Panc1 (cell line): ENCODE measurements at regions of chr16 and their contacts with region 1.

Region 1: DNA sequence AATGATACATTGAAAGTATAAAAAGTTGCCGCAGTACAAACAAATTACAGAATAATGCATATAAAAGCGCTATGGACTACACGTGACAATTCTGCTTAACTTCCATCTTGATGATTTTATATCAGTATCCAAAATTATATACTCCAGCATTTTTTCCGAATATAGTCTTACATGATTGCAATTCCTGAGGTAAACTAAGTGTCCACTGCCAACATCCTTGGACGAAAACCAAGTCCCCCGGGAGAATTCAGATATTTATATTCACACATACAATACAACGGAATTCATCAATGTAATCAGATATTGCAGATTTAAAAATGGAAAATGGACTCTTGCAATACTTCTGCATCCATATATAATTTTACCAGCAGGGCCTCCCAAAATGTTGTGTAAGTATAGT is 8.9 kb upstream of the MYH11 start:
- DNase-seq: no peak
- ATAC-seq: no peak
- H3K4me3 ChIP-seq: no peak overlapping the region
- H3K27ac ChIP-seq: no peak overlapping the region
- H3K4me1 ChIP-seq: no peaks in the 10 kb centered on the region
- H3K27me3 ChIP-seq: no peaks in the 10 kb centered on the region
- CTCF ChIP-seq: no peak

Region 2: GRCh38 chr16:15607700-15608396 is 257.9 kb before region 1 on chr16:
- CTCF ChIA-PET with region 1: no interaction called
- POLR2A ChIA-PET with region 1: no interaction called
- in situ Hi-C with region 1: no loop called
- intact Hi-C with region 1: no loop called
- DNase-seq: no peak
- ATAC-seq: no peak
- H3K4me3 ChIP-seq: no peak overlapping the region
- H3K27ac ChIP-seq: peak overlapping the region; percentile 7; the same call in 1 of the 2 replicates
- H3K4me1 ChIP-seq: no peaks in the 10 kb centered on the region
- H3K27me3 ChIP-seq: no peaks in the 10 kb centered on the region
- CTCF ChIP-seq: no peak

Region 3: DNA sequence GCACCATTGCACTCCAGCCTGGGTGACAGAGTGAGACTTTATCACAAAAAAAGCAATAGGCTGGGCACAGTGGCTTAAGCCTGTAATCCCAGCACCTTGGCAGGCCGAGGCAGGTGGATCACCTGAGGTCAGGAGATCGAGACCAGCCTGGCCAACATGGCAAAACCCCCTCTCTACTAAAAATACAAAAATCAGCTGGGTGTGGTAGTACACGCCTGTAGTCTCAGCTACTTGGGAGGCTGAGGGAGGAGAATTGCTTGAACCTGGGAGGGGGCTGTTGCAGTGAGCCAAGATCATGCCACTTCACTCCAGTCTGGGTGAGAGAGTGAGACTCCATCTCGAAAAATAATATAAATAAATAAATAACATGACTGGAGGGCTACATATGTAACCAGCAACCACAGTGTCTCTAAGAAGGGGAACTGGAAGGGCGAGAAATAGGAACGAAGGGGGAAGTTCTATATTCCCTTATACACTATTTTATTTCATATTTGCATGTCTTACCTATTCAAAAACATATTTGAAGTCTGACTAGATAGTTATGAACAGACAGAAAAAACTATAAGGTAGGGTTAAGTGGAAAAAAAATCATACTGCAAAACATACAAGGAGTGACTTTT is 34.8 kb before region 1 on chr16:
- CTCF ChIA-PET with region 1: no interaction called
- POLR2A ChIA-PET with region 1: no interaction called
- in situ Hi-C with region 1: loop called (anchors 5 kb)
- intact Hi-C with region 1: no loop called
- DNase-seq: no peak
- ATAC-seq: no peak
- H3K4me3 ChIP-seq: no peak overlapping the region
- H3K27ac ChIP-seq: no peak overlapping the region
- H3K4me1 ChIP-seq: no peaks in the 10 kb centered on the region
- H3K27me3 ChIP-seq: no peaks in the 10 kb centered on the region
- CTCF ChIP-seq: no peak

Region 4: DNA sequence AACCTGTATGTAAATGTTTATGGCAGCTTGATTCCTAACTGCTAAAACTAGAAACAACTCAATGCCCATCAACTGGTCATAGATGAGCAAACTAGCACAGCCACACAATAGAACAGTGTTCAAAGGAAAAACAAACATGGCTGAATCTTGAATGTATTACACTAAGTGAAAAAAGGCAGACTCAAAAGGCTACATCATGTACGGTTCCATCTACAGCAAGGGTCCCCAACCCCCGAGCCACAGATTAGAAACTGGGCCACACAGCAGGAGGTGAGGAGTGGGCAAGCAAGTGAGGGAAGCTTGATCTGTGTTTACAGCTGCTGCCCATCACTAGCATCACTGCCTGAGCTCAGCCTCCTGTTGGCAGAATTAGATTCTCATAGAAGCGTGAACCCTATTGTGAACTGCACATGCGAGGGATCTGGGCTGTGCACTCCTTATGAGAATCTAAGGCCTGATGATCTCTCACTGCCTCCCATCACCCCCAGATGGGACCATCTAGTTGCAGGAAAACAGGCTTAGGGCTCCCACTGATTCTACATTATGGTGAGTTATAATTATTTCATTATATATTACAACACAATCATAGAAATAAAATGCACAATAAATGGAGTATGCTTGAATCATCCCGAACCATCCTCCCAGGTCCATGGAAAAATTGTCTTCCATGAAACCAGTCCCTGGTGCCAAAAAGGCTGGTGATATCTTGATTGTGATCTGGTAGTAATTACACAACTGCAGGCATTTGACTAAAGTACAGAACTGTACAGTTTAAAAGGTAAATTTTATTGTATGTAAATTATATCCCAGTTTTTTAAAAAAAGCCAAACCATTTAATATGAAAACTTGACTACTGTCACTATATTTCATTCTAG is 14.9 kb after region 1 on chr16:
- CTCF ChIA-PET with region 1: no interaction called
- POLR2A ChIA-PET with region 1: no interaction called
- in situ Hi-C with region 1: no loop called
- intact Hi-C with region 1: no loop called
- DNase-seq: no peak
- ATAC-seq: no peak
- H3K4me3 ChIP-seq: no peak overlapping the region
- H3K27ac ChIP-seq: peak overlapping the region; percentile 54
- H3K4me1 ChIP-seq: peaks cover 24% of the 10 kb centered on the region
- H3K27me3 ChIP-seq: no peaks in the 10 kb centered on the region
- CTCF ChIP-seq: no peak